Activated B cell treated with CpG ODN at 0.5 μM for 24 hours (primary cell): ENCODE measurements at regions of chr10 and their contacts with region 1.

Region 1: GRCh38 chr10:93376372-93377293 is 105.5 kb downstream of the MYOF start:
- DNase-seq: no peak
- ATAC-seq: peak; percentile 82
- H3K4me3 Mint-ChIP-seq: no peak overlapping the region
- H3K27ac Mint-ChIP-seq: no peak overlapping the region
- H3K4me1 Mint-ChIP-seq: peaks cover 2% of the 10 kb centered on the region
- H3K27me3 Mint-ChIP-seq: peaks cover 3% of the 10 kb centered on the region
- CTCF ChIP-seq: peak; percentile 81

Region 2: GRCh38 chr10:93386631-93387369 is 10.2 kb after region 1 on chr10:
- CTCF ChIA-PET with region 1: interaction called, 11 read pairs
- POLR2A ChIA-PET with region 1: no interaction called
- intact Hi-C with region 1: no loop called
- DNase-seq: no peak
- ATAC-seq: no peak
- H3K4me3 Mint-ChIP-seq: no peak overlapping the region
- H3K27ac Mint-ChIP-seq: no peak overlapping the region
- H3K4me1 Mint-ChIP-seq: peaks cover 24% of the 10 kb centered on the region
- H3K27me3 Mint-ChIP-seq: no peaks in the 10 kb centered on the region
- CTCF ChIP-seq: no peak

Region 3: GRCh38 chr10:93482145-93482834 is 105.7 kb after region 1 on chr10 and contains the start of gene MYOF:
- CTCF ChIA-PET with region 1: interaction called, 237 read pairs
- POLR2A ChIA-PET with region 1: interaction called, 6 read pairs
- intact Hi-C with region 1: loop called (anchors 1 kb)
- DNase-seq: no peak
- ATAC-seq: peak; percentile 91
- H3K4me3 Mint-ChIP-seq: peak within 1 kb of the TSS; percentile 81
- H3K27ac Mint-ChIP-seq: peak within 1 kb of the TSS; percentile 4
- H3K4me1 Mint-ChIP-seq: peaks cover 15% of the 10 kb centered on the region
- H3K27me3 Mint-ChIP-seq: peaks cover 9% of the 10 kb centered on the region
- CTCF ChIP-seq: no peak
- total RNA-seq, gene MYOF: 0.09 and 0.15 TPM in 2 replicates

Region 4: GRCh38 chr10:93515071-93516005 is 138.7 kb after region 1 on chr10:
- CTCF ChIA-PET with region 1: interaction called, 85 read pairs
- POLR2A ChIA-PET with region 1: no interaction called
- intact Hi-C with region 1: loop called (anchors 1 kb)
- DNase-seq: no peak
- ATAC-seq: no peak
- H3K4me3 Mint-ChIP-seq: no peak overlapping the region
- H3K27ac Mint-ChIP-seq: no peak overlapping the region
- H3K4me1 Mint-ChIP-seq: peaks cover 9% of the 10 kb centered on the region
- H3K27me3 Mint-ChIP-seq: no peaks in the 10 kb centered on the region
- CTCF ChIP-seq: no peak

Region 5: GRCh38 chr10:93816123-93816747 is 439.6 kb after region 1 on chr10:
- CTCF ChIA-PET with region 1: interaction called, 6 read pairs
- POLR2A ChIA-PET with region 1: no interaction called
- intact Hi-C with region 1: loop called (anchors 1 kb)
- DNase-seq: no peak
- ATAC-seq: peak; percentile 45
- H3K4me3 Mint-ChIP-seq: no peak overlapping the region
- H3K27ac Mint-ChIP-seq: no peak overlapping the region
- H3K4me1 Mint-ChIP-seq: no peaks in the 10 kb centered on the region
- H3K27me3 Mint-ChIP-seq: peaks cover 38% of the 10 kb centered on the region
- CTCF ChIP-seq: no peak

Region 6: GRCh38 chr10:94320285-94320914 is 943.8 kb after region 1 on chr10:
- CTCF ChIA-PET with region 1: no interaction called
- POLR2A ChIA-PET with region 1: no interaction called
- intact Hi-C with region 1: loop called (anchors 5 kb)
- DNase-seq: peak; percentile 27
- ATAC-seq: no peak
- H3K4me3 Mint-ChIP-seq: no peak overlapping the region
- H3K27ac Mint-ChIP-seq: no peak overlapping the region
- H3K4me1 Mint-ChIP-seq: no peaks in the 10 kb centered on the region
- H3K27me3 Mint-ChIP-seq: no peaks in the 10 kb centered on the region
- CTCF ChIP-seq: peak; percentile 40